CD4-positive, alpha-beta memory T cell (primary cell): ENCODE measurements at regions of chr12 and their contacts with region 1.

Region 1: GRCh38 chr12:27523642-27524493 is at the start of gene PPFIBP1:
- DNase-seq: peak; percentile 84 to 96 (median 87)
- H3K4me3 ChIP-seq: peak within 1 kb of the TSS; percentile 39 to 98
- H3K4me3 Mint-ChIP-seq: peak within 1 kb of the TSS; percentile 96 to 99 (median 98)
- H3K27ac ChIP-seq: peak within 1 kb of the TSS; percentile 65
- H3K27ac Mint-ChIP-seq: peak within 1 kb of the TSS; percentile 92 to 97 (median 95)
- H3K4me1 ChIP-seq: peaks cover 17% of the 10 kb centered on the region
- H3K4me1 Mint-ChIP-seq: peaks cover 13 to 40% (median 27%) of the 10 kb centered on the region in 4 donors
- H3K27me3 ChIP-seq: no peaks in the 10 kb centered on the region
- H3K27me3 Mint-ChIP-seq: peaks cover 4% of the 10 kb centered on the region in 2 donors
- total RNA-seq, gene PPFIBP1: 5.2 to 6.5 TPM

Region 2: GRCh38 chr12:27024291-27024690 is 499.6 kb before region 1 on chr12:
- CTCF ChIA-PET with region 1: no interaction called
- POLR2A ChIA-PET with region 1: no interaction called
- intact Hi-C with region 1: loop called (anchors 5 kb)
- DNase-seq: no peak
- H3K4me3 ChIP-seq: no peak overlapping the region
- H3K4me3 Mint-ChIP-seq: peak overlapping the region in 6 of 8 donors; percentile 57 to 100 (median 98)
- H3K27ac ChIP-seq: no peak overlapping the region
- H3K27ac Mint-ChIP-seq: peak overlapping the region in 2 of 7 donors; percentile 23 to 98
- H3K4me1 ChIP-seq: peaks cover 30% of the 10 kb centered on the region
- H3K4me1 Mint-ChIP-seq: peaks cover 31 to 51% (median 37%) of the 10 kb centered on the region in 4 donors
- H3K27me3 ChIP-seq: no peaks in the 10 kb centered on the region
- H3K27me3 Mint-ChIP-seq: peaks cover 0 to 2% of the 10 kb centered on the region in 2 donors

Region 3: DNA sequence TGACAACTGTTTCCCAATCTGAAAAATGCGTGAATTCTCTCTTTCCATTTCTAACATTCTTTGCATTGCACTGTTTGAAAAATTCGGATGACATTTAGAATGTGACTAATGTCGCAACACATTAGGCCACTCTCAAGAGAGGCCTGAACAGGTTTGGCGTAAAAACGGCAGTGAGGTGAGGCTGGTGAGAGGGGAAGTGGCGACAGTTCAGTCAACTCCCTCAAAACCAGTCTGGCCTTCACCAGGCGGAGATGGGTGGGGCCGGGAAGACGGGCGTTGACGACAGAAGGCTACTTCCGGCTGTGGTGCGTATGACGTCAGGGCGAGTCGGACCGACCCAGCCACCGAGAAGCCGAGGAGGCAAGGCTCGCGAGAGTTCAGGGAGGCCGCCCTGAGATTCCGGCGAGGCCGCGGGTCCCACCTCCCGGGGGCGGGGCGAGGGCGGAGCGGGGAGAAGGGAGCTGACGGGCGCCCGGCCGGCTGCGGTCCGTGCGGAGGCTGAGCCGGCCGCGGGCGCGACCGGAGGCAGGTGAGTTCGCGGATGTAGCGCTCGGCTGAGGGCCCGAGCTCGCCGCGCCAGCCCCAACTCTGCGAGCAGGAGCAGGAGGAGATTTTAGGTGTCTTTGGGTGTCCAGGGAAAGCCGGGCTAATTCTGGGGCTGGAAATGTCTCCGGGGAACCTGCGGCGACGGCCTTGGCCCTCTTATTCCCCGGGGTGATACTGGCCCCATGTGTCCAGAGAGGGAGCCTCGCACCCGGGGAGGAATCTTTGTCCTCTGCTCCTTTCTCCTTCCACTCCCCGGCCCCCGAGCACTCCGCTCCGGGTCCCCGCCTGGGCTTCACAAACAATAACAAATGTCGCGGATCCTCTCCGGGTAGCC is 279.8 kb before region 1 on chr12 and contains the start of gene STK38L:
- CTCF ChIA-PET with region 1: no interaction called
- POLR2A ChIA-PET with region 1: no interaction called
- intact Hi-C with region 1: loop called (anchors 5 kb)
- DNase-seq: peak; percentile 95 to 97 (median 97)
- H3K4me3 ChIP-seq: peak within 1 kb of the TSS; percentile 85 to 87
- H3K4me3 Mint-ChIP-seq: peak within 1 kb of the TSS; percentile 97 to 99 (median 98)
- H3K27ac ChIP-seq: peak within 1 kb of the TSS; percentile 77
- H3K27ac Mint-ChIP-seq: peak within 1 kb of the TSS; percentile 93 to 99 (median 99)
- H3K4me1 ChIP-seq: peaks cover 27% of the 10 kb centered on the region
- H3K4me1 Mint-ChIP-seq: peaks cover 32 to 58% (median 47%) of the 10 kb centered on the region in 4 donors
- H3K27me3 ChIP-seq: no peaks in the 10 kb centered on the region
- H3K27me3 Mint-ChIP-seq: no peaks in the 10 kb centered on the region
- total RNA-seq, gene STK38L: 17.2 to 21.8 TPM

Region 4: GRCh38 chr12:27434673-27435565 is 88.9 kb before region 1 on chr12:
- CTCF ChIA-PET with region 1: interaction called, 3 read pairs
- POLR2A ChIA-PET with region 1: no interaction called
- intact Hi-C with region 1: loop called (anchors 1 kb)
- DNase-seq: peak in 4 of 5 donors; percentile 11 to 18 (median 13)
- H3K4me3 ChIP-seq: no peak overlapping the region
- H3K4me3 Mint-ChIP-seq: no peak overlapping the region
- H3K27ac ChIP-seq: no peak overlapping the region
- H3K27ac Mint-ChIP-seq: peak overlapping the region in 1 of 7 donors; percentile 54
- H3K4me1 ChIP-seq: no peaks in the 10 kb centered on the region
- H3K4me1 Mint-ChIP-seq: peaks cover 2 to 13% (median 6%) of the 10 kb centered on the region in 4 donors
- H3K27me3 ChIP-seq: no peaks in the 10 kb centered on the region
- H3K27me3 Mint-ChIP-seq: peaks cover 8 to 15% of the 10 kb centered on the region in 2 donors

Region 5: DNA sequence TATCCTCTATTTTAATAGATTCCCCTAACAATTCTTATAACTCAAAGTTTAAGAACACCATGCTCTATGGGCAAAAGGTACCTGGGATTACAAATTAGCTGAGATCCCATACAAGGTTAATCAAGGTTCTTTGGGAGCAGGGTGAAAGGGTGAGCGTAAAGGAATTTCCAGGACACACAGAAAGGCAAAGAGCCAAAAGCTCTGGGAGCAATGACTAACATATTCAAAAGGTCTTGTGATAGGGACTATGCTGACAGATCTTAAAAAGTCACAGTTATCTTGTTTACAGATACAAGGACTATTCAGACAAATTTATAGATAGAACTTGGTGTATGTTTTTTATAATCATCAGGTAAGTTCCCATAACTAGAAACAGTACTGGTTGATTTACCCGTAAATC is 19.4 kb before region 1 on chr12:
- CTCF ChIA-PET with region 1: no interaction called
- POLR2A ChIA-PET with region 1: no interaction called
- intact Hi-C with region 1: no loop called
- DNase-seq: no peak
- H3K4me3 ChIP-seq: no peak overlapping the region
- H3K4me3 Mint-ChIP-seq: no peak overlapping the region
- H3K27ac ChIP-seq: no peak overlapping the region
- H3K27ac Mint-ChIP-seq: no peak overlapping the region
- H3K4me1 ChIP-seq: no peaks in the 10 kb centered on the region
- H3K4me1 Mint-ChIP-seq: peaks cover 0 to 10% (median 8%) of the 10 kb centered on the region in 4 donors
- H3K27me3 ChIP-seq: no peaks in the 10 kb centered on the region
- H3K27me3 Mint-ChIP-seq: peaks cover 9 to 10% of the 10 kb centered on the region in 2 donors

Region 6: DNA sequence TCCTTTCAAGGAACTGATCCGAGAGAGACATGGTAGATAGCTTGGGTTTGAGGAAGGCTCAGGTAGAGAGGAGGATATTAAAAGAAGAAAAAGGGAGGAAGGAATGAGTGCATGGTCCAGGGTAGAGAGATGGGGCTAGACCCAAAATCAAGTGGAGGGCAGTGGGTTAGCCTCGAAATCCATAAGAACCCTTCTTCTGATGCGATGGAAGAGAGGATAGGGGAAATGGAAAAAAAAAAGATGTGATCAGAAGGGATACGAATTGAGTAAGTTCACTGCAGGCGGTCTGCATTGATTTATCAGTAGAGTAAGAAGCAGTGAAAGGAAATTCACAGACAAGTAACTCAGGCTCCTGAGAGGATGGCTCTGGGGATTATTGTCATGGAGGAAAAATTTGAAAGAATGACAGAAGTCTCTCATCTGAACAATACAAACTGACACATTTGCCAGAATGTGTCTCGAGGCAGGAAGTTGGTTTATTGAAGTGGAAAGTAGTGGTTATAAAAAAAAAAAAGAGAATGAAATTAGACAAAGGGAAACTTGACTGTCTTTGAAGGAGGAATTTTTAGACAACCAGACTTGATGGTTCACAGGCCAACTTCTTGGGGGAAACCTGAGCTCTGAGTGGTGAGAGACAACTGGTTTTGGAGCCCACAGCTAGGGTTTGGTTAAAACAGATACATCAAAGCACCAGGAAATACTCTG is 10.3 kb after region 1 on chr12:
- CTCF ChIA-PET with region 1: no interaction called
- POLR2A ChIA-PET with region 1: no interaction called
- intact Hi-C with region 1: loop called (anchors 1 kb)
- DNase-seq: peak in 3 of 5 donors; percentile 16 to 37 (median 29)
- H3K4me3 ChIP-seq: no peak overlapping the region
- H3K4me3 Mint-ChIP-seq: peak overlapping the region in 5 of 8 donors; percentile 5 to 45 (median 30)
- H3K27ac ChIP-seq: no peak overlapping the region
- H3K27ac Mint-ChIP-seq: peak overlapping the region in 5 of 7 donors; percentile 42 to 58 (median 45)
- H3K4me1 ChIP-seq: peaks cover 14% of the 10 kb centered on the region
- H3K4me1 Mint-ChIP-seq: peaks cover 14 to 20% (median 17%) of the 10 kb centered on the region in 4 donors
- H3K27me3 ChIP-seq: no peaks in the 10 kb centered on the region
- H3K27me3 Mint-ChIP-seq: no peaks in the 10 kb centered on the region

Region 7: GRCh38 chr12:27710592-27711316 is 186.9 kb after region 1 on chr12 and contains the start of gene MRPS35:
- CTCF ChIA-PET with region 1: no interaction called
- POLR2A ChIA-PET with region 1: no interaction called
- intact Hi-C with region 1: loop called (anchors 1 kb)
- DNase-seq: peak; percentile 90 to 92 (median 91)
- H3K4me3 ChIP-seq: peak within 1 kb of the TSS; percentile 52 to 78
- H3K4me3 Mint-ChIP-seq: peak within 1 kb of the TSS; percentile 92 to 100 (median 98)
- H3K27ac ChIP-seq: peak within 1 kb of the TSS; percentile 70
- H3K27ac Mint-ChIP-seq: peak within 1 kb of the TSS; percentile 90 to 99 (median 97)
- H3K4me1 ChIP-seq: peaks cover 25% of the 10 kb centered on the region
- H3K4me1 Mint-ChIP-seq: peaks cover 15 to 44% (median 29%) of the 10 kb centered on the region in 4 donors
- H3K27me3 ChIP-seq: no peaks in the 10 kb centered on the region
- H3K27me3 Mint-ChIP-seq: no peaks in the 10 kb centered on the region
- total RNA-seq, gene MRPS35: 20.3 to 21.1 TPM